ENCODE measurements at regions of chr17 and their contacts with region 1.

Region 1: DNA sequence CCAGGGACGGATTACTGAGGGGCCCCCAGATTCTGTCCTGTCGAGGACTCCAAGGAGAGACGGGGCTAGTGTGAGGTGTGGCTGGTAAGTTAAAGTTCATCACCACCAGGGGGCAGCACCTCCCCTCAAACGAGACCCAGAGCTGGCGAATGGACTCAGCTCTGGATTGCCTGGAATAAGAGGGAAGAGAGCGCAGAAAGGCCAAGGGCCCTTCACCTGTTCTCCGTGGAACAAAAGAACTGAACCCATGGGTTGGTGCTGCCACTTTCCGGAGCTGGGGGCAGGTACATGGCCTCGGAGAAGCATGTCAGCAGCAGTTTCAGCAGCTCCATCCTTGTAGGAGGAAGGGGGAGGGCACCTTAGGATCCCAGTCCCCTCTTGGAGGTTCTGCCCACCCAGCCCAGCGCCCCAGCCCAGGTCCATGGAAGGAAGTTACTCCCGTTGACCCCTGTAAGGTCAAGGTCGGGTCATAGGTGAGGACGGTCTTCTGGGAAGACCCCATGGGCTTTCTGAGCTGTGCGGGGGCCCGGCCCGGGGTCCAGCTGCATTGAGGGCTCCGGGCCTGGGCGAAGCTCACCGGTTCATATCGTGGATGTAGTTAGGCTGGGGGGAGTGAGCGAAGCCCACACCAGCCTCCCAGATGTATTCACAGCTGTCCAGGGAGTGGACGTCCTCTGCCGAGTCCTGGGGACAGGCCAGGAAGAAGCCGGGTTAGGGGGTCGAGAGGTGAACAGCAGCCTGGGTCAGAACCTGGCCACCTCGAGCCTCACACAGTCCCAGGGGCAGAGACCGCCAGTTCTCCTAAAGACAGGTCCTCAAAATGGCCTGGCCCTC is 10.7 kb downstream of the HID1 start:
- DNase-seq: peak; percentile 95
- ATAC-seq: peak; percentile 92
- H3K4me3 ChIP-seq: no peak overlapping the region
- H3K27ac ChIP-seq: no peak overlapping the region
- H3K4me1 ChIP-seq: no peaks in the 10 kb centered on the region
- H3K27me3 ChIP-seq: no peaks in the 10 kb centered on the region
- CTCF ChIP-seq: peak; percentile 93

Region 2: GRCh38 chr17:74904687-74905409 is 57.0 kb before region 1 on chr17:
- CTCF ChIA-PET with region 1: no interaction called
- POLR2A ChIA-PET with region 1: no interaction called
- intact Hi-C with region 1: no loop called
- DNase-seq: no peak
- ATAC-seq: no peak
- H3K4me3 ChIP-seq: no peak overlapping the region
- H3K27ac ChIP-seq: no peak overlapping the region
- H3K4me1 ChIP-seq: no peaks in the 10 kb centered on the region
- H3K27me3 ChIP-seq: peaks cover 4% of the 10 kb centered on the region; the same call in 1 of the 2 replicates
- CTCF ChIP-seq: no peak

Region 3: DNA sequence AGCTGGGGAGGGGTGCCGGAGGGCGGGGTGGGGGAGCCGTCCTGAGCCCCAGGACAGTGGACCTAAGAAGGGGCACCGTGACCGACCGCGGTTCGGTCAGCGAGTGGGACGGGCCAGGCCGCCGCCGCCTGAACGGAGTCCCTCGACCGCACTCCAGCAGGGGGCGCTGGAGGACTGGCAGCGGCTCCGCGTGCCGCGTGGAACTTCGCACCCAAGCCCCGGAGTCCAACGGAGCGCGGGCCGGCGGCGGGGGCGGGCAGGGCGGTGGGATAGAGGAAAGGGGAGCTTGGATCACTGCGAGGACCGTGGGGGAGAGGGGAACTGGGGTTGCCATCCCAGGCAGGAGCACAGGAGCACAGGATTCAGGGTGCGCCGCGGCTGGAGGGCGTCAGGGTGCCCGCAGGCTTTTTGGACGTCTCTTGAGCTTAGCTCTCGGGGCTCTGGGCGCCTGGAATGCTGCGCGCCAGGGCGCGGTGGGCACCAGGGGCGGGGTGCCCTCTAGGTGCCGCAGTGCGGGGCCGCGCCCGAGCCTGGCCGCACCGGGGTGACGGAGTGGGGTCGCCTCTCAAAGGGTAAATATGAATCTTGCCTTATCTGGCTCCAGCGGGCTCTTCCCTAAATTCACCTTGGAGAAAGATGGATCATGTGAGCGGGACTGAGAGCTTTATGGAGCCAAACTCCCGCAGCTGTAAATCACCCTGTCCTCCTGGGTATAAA is 38.2 kb before region 1 on chr17:
- CTCF ChIA-PET with region 1: interaction called, 18 read pairs
- POLR2A ChIA-PET with region 1: no interaction called
- intact Hi-C with region 1: loop called (anchors 1 kb)
- DNase-seq: peak; percentile 80
- ATAC-seq: peak; percentile 88
- H3K4me3 ChIP-seq: peak overlapping the region; percentile 63
- H3K27ac ChIP-seq: no peak overlapping the region
- H3K4me1 ChIP-seq: no peaks in the 10 kb centered on the region; the same call in 1 of the 2 replicates
- H3K27me3 ChIP-seq: peaks cover 31% of the 10 kb centered on the region
- CTCF ChIP-seq: peak; percentile 88

Region 4: GRCh38 chr17:74987418-74987908 is 25.6 kb after region 1 on chr17 and contains the start of gene CDR2L:
- CTCF ChIA-PET with region 1: interaction called, 14 read pairs
- POLR2A ChIA-PET with region 1: interaction called, 6 read pairs
- intact Hi-C with region 1: loop called (anchors 2 kb)
- DNase-seq: peak; percentile 97
- ATAC-seq: peak; percentile 84
- H3K4me3 ChIP-seq: peak within 1 kb of the TSS; percentile 84
- H3K27ac ChIP-seq: peak within 1 kb of the TSS; percentile 17
- H3K4me1 ChIP-seq: peaks cover 22% of the 10 kb centered on the region
- H3K27me3 ChIP-seq: no peaks in the 10 kb centered on the region
- CTCF ChIP-seq: no peak
- total RNA-seq, gene CDR2L: 35.8 and 50.9 TPM in 2 replicates

Region 5: GRCh38 chr17:75006653-75007052 is 44.8 kb after region 1 on chr17:
- CTCF ChIA-PET with region 1: interaction called, 6 read pairs
- POLR2A ChIA-PET with region 1: interaction called, 14 read pairs
- intact Hi-C with region 1: loop called (anchors 1 kb)
- DNase-seq: peak; percentile 26
- ATAC-seq: no peak
- H3K4me3 ChIP-seq: no peak overlapping the region
- H3K27ac ChIP-seq: no peak overlapping the region
- H3K4me1 ChIP-seq: peaks cover 15% of the 10 kb centered on the region
- H3K27me3 ChIP-seq: no peaks in the 10 kb centered on the region
- CTCF ChIP-seq: 0 out of 2 replicates have a peak, but pooled peaks have one; percentile 24

Region 6: GRCh38 chr17:75012346-75013091 is 50.6 kb after region 1 on chr17 and contains the start of gene MRPL58:
- CTCF ChIA-PET with region 1: interaction called, 8 read pairs
- POLR2A ChIA-PET with region 1: interaction called, 14 read pairs
- intact Hi-C with region 1: loop called (anchors 2 kb)
- DNase-seq: peak; percentile 91
- ATAC-seq: peak; percentile 83
- H3K4me3 ChIP-seq: peak within 1 kb of the TSS; percentile 87
- H3K27ac ChIP-seq: peak within 1 kb of the TSS; percentile 68
- H3K4me1 ChIP-seq: peaks cover 30% of the 10 kb centered on the region
- H3K27me3 ChIP-seq: no peaks in the 10 kb centered on the region
- CTCF ChIP-seq: peak; percentile 38; the same call in 1 of the 2 replicates
- total RNA-seq, gene MRPL58: 151 and 195 TPM in 2 replicates

Region 7: GRCh38 chr17:75034236-75034908 is 72.5 kb after region 1 on chr17:
- CTCF ChIA-PET with region 1: no interaction called
- POLR2A ChIA-PET with region 1: no interaction called
- intact Hi-C with region 1: loop called (anchors 1 kb)
- DNase-seq: peak; percentile 99
- ATAC-seq: peak; percentile 33
- H3K4me3 ChIP-seq: peak overlapping the region; percentile 77
- H3K27ac ChIP-seq: peak overlapping the region; percentile 87
- H3K4me1 ChIP-seq: peaks cover 36% of the 10 kb centered on the region
- H3K27me3 ChIP-seq: no peaks in the 10 kb centered on the region
- CTCF ChIP-seq: peak; percentile 3; the same call in 1 of the 2 replicates

Region 8: DNA sequence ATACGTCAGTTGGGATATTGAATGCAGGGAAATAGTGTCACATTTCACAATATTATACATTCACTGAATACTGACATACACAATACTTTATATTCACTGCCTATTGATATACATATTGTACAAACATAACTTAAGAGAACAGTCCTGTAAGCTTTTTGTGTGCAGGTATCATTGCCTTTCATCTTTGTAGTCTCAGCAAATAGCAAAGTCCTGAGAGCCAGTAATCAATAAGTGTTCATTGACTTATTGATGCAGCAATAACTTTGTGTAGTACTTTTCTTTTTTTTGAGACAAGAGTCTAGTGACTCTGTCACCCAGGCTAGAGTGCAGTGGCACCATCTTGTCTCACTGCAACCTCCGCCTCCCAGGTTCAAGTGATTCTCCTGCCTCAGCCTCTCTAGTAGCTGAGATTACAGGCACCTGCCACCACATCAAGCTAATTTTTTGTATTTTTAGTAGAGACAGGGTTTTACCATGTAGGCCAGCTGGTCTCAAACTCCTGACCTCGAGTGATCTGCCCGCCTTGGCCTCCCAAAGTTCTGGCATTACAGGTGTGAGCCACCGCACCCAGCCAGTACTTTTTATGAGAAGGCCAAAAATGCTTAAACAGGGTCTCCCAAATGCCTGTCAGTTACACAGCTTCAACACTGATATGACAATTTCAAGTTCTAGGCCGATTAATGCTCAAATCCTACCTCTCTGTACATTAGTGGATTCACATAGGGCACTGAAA is 238.2 kb after region 1 on chr17:
- CTCF ChIA-PET with region 1: interaction called, 10 read pairs
- POLR2A ChIA-PET with region 1: no interaction called
- intact Hi-C with region 1: loop called (anchors 5 kb)
- DNase-seq: no peak
- ATAC-seq: no peak
- H3K4me3 ChIP-seq: no peak overlapping the region
- H3K27ac ChIP-seq: no peak overlapping the region
- H3K4me1 ChIP-seq: peaks cover 5% of the 10 kb centered on the region; the same call in 1 of the 2 replicates
- H3K27me3 ChIP-seq: no peaks in the 10 kb centered on the region
- CTCF ChIP-seq: no peak